Activated naive CD4-positive, alpha-beta T cell treated with anti-CD3 and anti-CD28 coated beads for 36 hours (primary cell): ENCODE measurements at regions of chrX and their contacts with region 1.

Region 1: DNA sequence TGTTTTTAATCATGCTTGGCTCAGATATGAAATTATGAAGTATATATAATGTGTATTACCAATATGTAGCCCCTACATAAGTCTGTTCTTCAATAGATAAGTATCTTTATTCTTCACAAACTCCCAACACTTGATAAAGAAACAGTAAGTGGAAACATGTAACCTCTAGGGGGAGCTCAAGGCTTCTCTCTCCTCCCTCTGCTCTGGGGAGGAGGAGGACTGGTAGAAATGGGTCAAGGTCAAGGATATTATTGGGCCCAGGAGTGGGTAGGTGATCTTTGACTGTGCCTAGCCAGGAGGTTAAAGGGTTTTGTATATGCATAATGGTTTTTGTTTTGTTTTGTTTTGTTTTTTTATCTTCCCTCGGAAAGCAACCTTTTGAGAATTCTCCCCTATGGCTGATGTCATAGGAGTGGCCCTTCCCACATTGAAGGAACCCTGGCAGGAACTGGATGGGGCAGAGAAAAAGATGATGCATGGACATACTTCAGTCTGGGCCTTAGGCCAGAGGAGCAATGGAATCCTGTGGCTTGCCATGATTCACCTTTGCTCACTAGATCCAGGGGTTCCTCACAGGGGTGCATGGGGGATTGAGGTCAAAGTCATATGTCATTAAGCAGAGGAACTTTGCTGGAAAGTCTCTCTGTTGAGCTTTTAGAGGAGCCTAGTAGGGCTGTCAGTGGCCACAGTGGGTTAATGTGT is 460.3 kb downstream of the MID1IP1 start:
- DNase-seq: peak; percentile 40
- H3K4me3 Mint-ChIP-seq: no peak overlapping the region
- H3K27ac Mint-ChIP-seq: peak overlapping the region; percentile 78
- H3K4me1 Mint-ChIP-seq: peaks cover 49% of the 10 kb centered on the region
- H3K27me3 Mint-ChIP-seq: no peaks in the 10 kb centered on the region

Region 2: GRCh38 chrX:39242187-39242586 is 19.4 kb before region 1 on chrX:
- CTCF ChIA-PET with region 1: no interaction called
- intact Hi-C with region 1: no loop called
- DNase-seq: peak; percentile 17
- H3K4me3 Mint-ChIP-seq: no peak overlapping the region
- H3K27ac Mint-ChIP-seq: no peak overlapping the region
- H3K4me1 Mint-ChIP-seq: peaks cover 24% of the 10 kb centered on the region
- H3K27me3 Mint-ChIP-seq: no peaks in the 10 kb centered on the region

Region 3: DNA sequence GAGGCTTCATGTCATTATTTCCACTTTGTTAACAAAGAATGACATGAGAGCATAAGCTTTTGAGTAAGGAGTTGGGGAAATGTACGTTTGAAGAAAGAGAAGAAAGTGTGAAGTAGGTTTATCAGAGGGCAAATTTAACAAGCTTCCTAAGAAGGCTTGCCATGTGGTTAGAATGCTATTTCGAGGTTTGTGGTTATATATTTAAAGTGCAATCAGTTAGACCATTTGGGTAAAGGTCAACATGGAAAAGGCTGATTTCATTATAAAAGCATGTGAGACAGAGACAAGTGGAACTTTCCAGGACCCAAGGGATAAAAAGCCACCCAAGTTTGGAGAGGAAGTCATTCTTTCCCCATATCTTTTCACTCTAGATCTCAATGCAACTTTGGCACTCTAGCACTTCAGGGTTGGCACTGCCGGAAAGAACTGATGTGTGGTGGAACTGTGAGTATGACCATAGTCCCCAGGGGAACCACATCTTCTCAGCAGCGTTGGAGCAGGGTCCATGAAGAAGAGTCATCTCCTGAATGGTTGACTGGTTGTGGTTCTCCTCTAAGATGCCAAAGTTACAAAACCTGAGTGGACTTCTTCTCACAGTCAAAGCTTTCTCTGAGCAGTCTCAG is 69.6 kb after region 1 on chrX:
- CTCF ChIA-PET with region 1: no interaction called
- intact Hi-C with region 1: loop called (anchors 1 kb)
- DNase-seq: peak; percentile 61
- H3K4me3 Mint-ChIP-seq: no peak overlapping the region
- H3K27ac Mint-ChIP-seq: peak overlapping the region; percentile 82
- H3K4me1 Mint-ChIP-seq: peaks cover 74% of the 10 kb centered on the region
- H3K27me3 Mint-ChIP-seq: no peaks in the 10 kb centered on the region

Region 4: GRCh38 chrX:39367416-39367815 is 105.8 kb after region 1 on chrX:
- CTCF ChIA-PET with region 1: no interaction called
- intact Hi-C with region 1: no loop called
- DNase-seq: no peak
- H3K4me3 Mint-ChIP-seq: no peak overlapping the region
- H3K27ac Mint-ChIP-seq: no peak overlapping the region
- H3K4me1 Mint-ChIP-seq: peaks cover 9% of the 10 kb centered on the region
- H3K27me3 Mint-ChIP-seq: no peaks in the 10 kb centered on the region

Region 5: DNA sequence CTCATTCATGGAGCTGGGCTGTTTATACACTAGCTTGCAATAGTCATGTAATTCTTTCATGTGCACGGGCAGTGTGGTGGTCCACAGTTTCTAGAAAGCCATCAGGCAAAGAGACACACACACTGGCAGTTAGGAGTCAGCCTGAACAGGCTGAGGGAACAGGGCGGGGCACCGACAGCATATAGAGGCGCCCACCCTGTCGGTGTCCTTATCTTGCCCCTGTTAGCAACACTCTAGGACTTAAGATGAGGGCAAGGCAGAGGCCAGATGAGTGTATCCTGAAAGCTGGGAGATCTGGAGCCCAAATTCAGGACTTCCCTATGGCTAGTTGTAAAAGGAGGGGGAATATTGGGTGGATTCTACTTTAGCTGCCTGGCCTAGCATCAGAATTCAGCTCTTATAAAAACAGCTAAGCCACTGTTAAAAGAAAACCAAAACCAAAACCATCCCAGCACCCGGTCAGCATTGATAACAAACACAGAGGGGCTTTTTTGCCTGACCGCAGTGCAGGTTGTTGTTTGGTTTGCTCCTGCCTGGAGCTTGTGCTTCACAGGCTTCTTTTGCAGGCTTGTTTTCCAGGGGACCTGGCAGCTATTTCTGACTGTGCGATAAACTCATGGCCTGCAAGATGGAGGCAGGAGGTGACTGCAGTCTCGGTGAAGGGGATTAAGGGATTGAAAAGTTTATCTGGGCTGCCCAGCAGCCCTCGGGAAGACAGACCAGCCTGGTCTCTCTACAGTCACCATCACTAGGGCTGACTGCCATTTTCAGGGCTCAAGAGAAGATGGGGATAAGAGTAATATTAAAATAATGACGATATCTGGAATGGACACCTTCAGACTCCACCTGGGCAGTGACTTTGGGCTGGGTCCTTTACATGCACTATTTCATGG is 178.6 kb after region 1 on chrX:
- CTCF ChIA-PET with region 1: interaction called, 8 read pairs
- intact Hi-C with region 1: loop called (anchors 1 kb)
- DNase-seq: peak; percentile 44
- H3K4me3 Mint-ChIP-seq: peak overlapping the region; percentile 42
- H3K27ac Mint-ChIP-seq: peak overlapping the region; percentile 86
- H3K4me1 Mint-ChIP-seq: peaks cover 29% of the 10 kb centered on the region
- H3K27me3 Mint-ChIP-seq: no peaks in the 10 kb centered on the region

Region 6: DNA sequence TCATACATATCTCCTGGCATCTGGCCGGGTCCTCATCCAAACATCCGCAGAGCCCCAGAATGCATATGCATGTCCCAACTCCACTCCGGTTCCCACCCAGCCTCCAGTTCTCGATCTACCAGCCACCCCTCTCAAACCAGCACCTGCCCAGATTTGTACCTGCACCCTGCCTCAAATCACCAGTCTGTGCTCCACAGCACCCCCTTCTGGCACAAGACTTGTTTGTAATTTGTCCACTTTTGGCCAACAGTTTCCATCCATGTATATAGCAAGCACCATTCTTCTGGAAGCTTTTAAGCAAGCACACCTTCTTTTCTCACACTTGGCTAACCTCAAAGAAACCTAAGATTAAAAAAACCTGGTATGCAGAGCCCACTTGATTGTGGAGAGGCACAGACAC is 183.7 kb after region 1 on chrX:
- CTCF ChIA-PET with region 1: interaction called, 8 read pairs
- intact Hi-C with region 1: loop called (anchors 1 kb)
- DNase-seq: peak; percentile 70
- H3K4me3 Mint-ChIP-seq: no peak overlapping the region
- H3K27ac Mint-ChIP-seq: peak overlapping the region; percentile 71
- H3K4me1 Mint-ChIP-seq: peaks cover 47% of the 10 kb centered on the region
- H3K27me3 Mint-ChIP-seq: no peaks in the 10 kb centered on the region

Region 7: GRCh38 chrX:39508300-39508692 is 246.7 kb after region 1 on chrX:
- CTCF ChIA-PET with region 1: no interaction called
- intact Hi-C with region 1: loop called (anchors 2 kb)
- DNase-seq: peak; percentile 52
- H3K4me3 Mint-ChIP-seq: no peak overlapping the region
- H3K27ac Mint-ChIP-seq: no peak overlapping the region
- H3K4me1 Mint-ChIP-seq: peaks cover 24% of the 10 kb centered on the region
- H3K27me3 Mint-ChIP-seq: no peaks in the 10 kb centered on the region

Region 8: DNA sequence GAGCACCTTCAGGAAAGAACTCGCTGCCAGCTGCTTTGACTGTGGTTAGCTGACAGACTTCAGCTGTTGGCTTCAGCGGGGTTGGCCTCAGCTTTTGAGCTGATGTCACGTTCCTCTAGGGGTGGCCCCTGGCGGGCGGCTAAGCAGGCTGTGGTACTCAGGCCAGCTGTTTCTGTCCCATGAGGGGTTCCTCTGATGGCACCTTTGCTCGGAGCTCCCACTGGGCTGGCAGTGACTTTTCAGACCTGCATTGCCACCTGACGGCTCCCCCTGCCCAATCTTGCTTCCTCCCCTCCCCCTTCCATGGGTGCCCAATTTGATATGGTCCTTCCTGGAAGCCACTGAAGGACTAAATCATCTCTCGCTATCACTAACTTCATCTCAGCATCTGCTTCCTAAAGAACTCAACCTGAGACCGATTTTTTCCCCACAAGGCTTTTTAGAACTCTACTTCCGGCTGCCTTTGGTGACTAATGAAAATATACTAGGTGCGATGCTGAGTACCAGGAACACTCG is 316.8 kb after region 1 on chrX:
- CTCF ChIA-PET with region 1: no interaction called
- intact Hi-C with region 1: loop called (anchors 5 kb)
- DNase-seq: peak; percentile 84
- H3K4me3 Mint-ChIP-seq: peak overlapping the region; percentile 29
- H3K27ac Mint-ChIP-seq: peak overlapping the region; percentile 89
- H3K4me1 Mint-ChIP-seq: peaks cover 23% of the 10 kb centered on the region
- H3K27me3 Mint-ChIP-seq: no peaks in the 10 kb centered on the region

Region 9: DNA sequence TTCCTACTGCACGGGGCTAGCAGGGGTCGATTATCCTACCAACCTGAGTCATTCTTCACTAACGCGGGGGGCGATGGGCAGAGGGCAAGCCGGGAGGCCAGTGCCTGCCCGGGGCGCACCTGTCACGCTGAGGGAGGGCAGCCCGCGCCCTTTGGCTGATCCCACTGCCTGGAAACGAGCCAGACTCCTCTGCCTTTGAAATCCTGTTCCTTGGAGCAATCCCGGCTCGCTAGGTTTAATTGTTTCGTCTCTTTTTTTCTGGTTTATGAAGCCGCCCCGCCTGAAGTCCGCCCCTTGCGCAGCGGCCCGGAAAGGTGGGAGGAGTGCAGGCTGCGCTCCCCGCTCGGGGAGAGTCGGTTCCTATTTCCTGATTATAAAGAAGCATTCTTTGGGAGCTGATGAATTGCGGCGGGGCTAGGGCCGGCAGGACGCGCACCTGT is 351.9 kb after region 1 on chrX:
- CTCF ChIA-PET with region 1: no interaction called
- intact Hi-C with region 1: loop called (anchors 5 kb)
- DNase-seq: peak; percentile 29
- H3K4me3 Mint-ChIP-seq: peak overlapping the region; percentile 70
- H3K27ac Mint-ChIP-seq: peak overlapping the region; percentile 87
- H3K4me1 Mint-ChIP-seq: peaks cover 22% of the 10 kb centered on the region
- H3K27me3 Mint-ChIP-seq: no peaks in the 10 kb centered on the region